ENCODE measurements at regions of chr6 and their contacts with region 1.

Region 1: DNA sequence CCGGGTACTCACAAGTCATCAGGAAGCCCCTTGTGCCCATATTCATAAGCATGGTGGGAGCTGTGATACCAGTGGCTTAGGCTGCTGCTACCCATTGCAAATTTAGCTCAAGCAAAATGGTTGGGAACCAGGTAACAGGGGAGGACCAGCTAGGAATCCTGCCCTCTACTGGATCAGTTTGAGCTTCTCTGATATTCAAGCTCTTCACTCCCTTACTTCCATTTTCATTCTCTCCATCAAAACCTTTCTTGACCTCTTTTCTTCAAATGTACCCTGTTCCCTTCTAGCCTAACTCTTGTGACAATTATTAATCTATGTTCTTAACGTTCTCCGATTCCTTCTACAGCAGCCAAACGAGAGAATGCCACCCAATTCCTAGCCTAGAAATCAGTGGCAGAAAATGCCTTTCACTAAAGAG is 9.7 kb downstream of the NOL7 start:
- DNase-seq: peak; percentile 63
- H3K4me3 ChIP-seq: no peak overlapping the region
- H3K27ac ChIP-seq: no peak overlapping the region
- H3K4me1 ChIP-seq: no peaks in the 10 kb centered on the region
- H3K27me3 ChIP-seq: no peaks in the 10 kb centered on the region
- CTCF ChIP-seq: peak; percentile 67

Region 2: GRCh38 chr6:13159300-13159699 is 465.6 kb before region 1 on chr6:
- CTCF ChIA-PET with region 1: no interaction called
- POLR2A ChIA-PET with region 1: no interaction called
- intact Hi-C with region 1: no loop called
- DNase-seq: peak; percentile 4
- H3K4me3 ChIP-seq: no peak overlapping the region
- H3K27ac ChIP-seq: no peak overlapping the region
- H3K4me1 ChIP-seq: no peaks in the 10 kb centered on the region
- H3K27me3 ChIP-seq: no peaks in the 10 kb centered on the region
- CTCF ChIP-seq: no peak

Region 3: GRCh38 chr6:13702809-13703302 is 78.0 kb after region 1 on chr6:
- CTCF ChIA-PET with region 1: no interaction called
- POLR2A ChIA-PET with region 1: no interaction called
- intact Hi-C with region 1: loop called (anchors 5 kb)
- DNase-seq: no peak
- H3K4me3 ChIP-seq: no peak overlapping the region
- H3K27ac ChIP-seq: no peak overlapping the region
- H3K4me1 ChIP-seq: peaks cover 9% of the 10 kb centered on the region
- H3K27me3 ChIP-seq: no peaks in the 10 kb centered on the region
- CTCF ChIP-seq: no peak

Region 4: GRCh38 chr6:13767121-13767808 is 142.4 kb after region 1 on chr6:
- CTCF ChIA-PET with region 1: no interaction called
- POLR2A ChIA-PET with region 1: no interaction called
- intact Hi-C with region 1: no loop called
- DNase-seq: peak; percentile 30
- H3K4me3 ChIP-seq: no peak overlapping the region
- H3K27ac ChIP-seq: no peak overlapping the region
- H3K4me1 ChIP-seq: peaks cover 21% of the 10 kb centered on the region
- H3K27me3 ChIP-seq: no peaks in the 10 kb centered on the region
- CTCF ChIP-seq: 0 out of 2 replicates have a peak, but pooled peaks have one; percentile 22